ENCODE measurements at regions of chr9 and their contacts with region 1.

Region 1: DNA sequence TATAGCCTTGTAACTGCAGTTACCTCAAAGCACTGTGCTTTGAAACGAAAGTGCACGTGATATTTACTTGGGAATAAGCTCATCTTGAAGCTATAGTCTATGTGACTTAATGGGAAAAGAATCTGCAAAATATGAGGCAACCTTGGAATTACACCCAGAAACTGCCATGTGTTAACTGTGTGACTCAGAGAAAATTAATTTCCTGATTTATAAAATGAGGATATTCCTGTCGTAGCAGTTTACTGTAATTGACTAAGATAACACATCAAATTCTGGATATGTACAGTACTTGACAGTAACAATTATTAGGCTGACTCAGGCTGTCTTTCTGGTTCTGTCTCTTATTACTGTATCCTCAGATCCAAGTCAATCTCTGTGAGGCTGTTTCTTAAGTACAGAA is 1079.9 kb upstream of the ACO1 start:
- DNase-seq: no peak
- ATAC-seq: no peak
- H3K4me3 ChIP-seq: no peak overlapping the region
- H3K4me3 Mint-ChIP-seq: no peak overlapping the region
- H3K27ac ChIP-seq: no peak overlapping the region
- H3K27ac Mint-ChIP-seq: no peak overlapping the region
- H3K4me1 ChIP-seq: peaks cover 0 to 8% of the 10 kb centered on the region in 2 donors
- H3K4me1 Mint-ChIP-seq: peaks cover 20% of the 10 kb centered on the region
- H3K27me3 ChIP-seq: no peaks in the 10 kb centered on the region
- H3K27me3 Mint-ChIP-seq: no peaks in the 10 kb centered on the region
- CTCF ChIP-seq: no peak

Region 2: GRCh38 chr9:31364171-31364570 is 59.6 kb after region 1 on chr9:
- CTCF ChIA-PET with region 1: no interaction called
- POLR2A ChIA-PET with region 1: no interaction called
- intact Hi-C with region 1: loop called (anchors 10 kb)
- DNase-seq: no peak
- ATAC-seq: no peak
- H3K4me3 ChIP-seq: no peak overlapping the region
- H3K4me3 Mint-ChIP-seq: no peak overlapping the region
- H3K27ac ChIP-seq: no peak overlapping the region
- H3K27ac Mint-ChIP-seq: no peak overlapping the region
- H3K4me1 ChIP-seq: no peaks in the 10 kb centered on the region
- H3K4me1 Mint-ChIP-seq: no peaks in the 10 kb centered on the region
- H3K27me3 ChIP-seq: no peaks in the 10 kb centered on the region
- H3K27me3 Mint-ChIP-seq: no peaks in the 10 kb centered on the region
- CTCF ChIP-seq: no peak

Region 3: DNA sequence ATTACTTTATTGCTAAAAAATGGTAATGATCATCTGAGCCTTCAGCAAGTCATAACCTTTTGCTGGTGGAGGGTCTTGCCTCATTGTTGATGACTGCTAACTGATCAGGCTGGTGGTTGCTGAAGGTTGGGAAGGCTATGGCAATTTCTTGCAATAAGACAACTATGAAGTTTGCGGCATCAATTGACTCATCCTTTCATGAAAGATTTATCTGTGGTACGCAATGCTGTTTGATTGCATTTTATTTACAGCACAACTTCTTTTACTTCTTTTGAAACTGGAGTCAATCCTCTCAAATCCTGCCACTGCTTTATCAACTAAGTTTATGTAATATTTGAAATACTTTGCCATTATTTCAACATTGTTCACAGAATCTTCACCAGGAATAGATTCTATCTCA is 1021.6 kb after region 1 on chr9:
- CTCF ChIA-PET with region 1: no interaction called
- POLR2A ChIA-PET with region 1: no interaction called
- intact Hi-C with region 1: no loop called
- DNase-seq: no peak
- ATAC-seq: no peak
- H3K4me3 ChIP-seq: no peak overlapping the region
- H3K4me3 Mint-ChIP-seq: no peak overlapping the region
- H3K27ac ChIP-seq: no peak overlapping the region
- H3K27ac Mint-ChIP-seq: no peak overlapping the region
- H3K4me1 ChIP-seq: no peaks in the 10 kb centered on the region
- H3K4me1 Mint-ChIP-seq: no peaks in the 10 kb centered on the region
- H3K27me3 ChIP-seq: no peaks in the 10 kb centered on the region
- H3K27me3 Mint-ChIP-seq: peaks cover 20% of the 10 kb centered on the region
- CTCF ChIP-seq: no peak

Measured in B cell (primary cell).